Endothelial cell of umbilical vein (primary cell): ENCODE measurements at regions of chr9 and their contacts with region 1.

Region 1: DNA sequence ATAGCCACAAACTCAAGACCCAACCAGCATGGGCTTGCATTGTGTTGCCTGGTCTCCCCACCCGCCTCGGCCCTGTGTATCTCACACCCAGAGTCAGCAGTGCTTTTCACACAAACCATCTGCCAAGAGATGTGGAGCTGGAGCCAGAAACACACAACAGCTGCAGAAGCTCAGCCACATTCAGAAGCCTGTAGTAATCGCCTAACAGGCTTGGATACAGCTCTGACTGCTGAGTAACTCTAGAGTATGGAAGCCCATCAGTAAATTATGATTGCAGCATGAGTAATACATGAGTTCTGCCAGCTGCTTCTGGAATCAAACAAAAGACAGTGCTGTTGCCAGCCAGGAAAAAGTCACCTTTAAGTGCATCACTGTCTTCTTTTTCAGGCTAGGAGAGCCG is 16.0 kb downstream of the TEK start:
- DNase-seq: peak; percentile 89
- H3K4me3 ChIP-seq: no peak overlapping the region
- H3K27ac ChIP-seq: peak overlapping the region; percentile 44
- H3K4me1 ChIP-seq: peaks cover 30% of the 10 kb centered on the region
- H3K27me3 ChIP-seq: no peaks in the 10 kb centered on the region
- CTCF ChIP-seq: no peak
- POLR2A ChIP-seq: no peak

Region 2: DNA sequence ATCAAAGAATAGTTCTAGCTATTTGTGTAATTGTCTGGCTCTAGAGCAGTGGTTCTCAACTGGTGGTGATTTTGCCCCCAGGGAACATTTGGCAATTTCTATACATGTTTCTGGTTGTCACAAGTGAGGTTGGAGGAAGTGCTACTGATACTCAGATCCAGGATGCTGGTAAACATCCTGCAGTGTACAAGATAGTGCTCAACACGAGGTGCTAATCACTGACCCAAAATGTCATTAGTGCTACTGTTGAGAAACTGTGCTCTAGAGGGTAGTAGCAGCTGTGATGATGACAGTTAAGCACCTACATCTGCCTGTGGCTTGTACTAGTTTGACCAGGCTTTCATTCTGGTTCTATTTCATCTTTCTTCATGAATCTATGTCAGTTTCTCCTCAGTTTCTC is 141.7 kb before region 1 on chr9:
- CTCF ChIA-PET with region 1: no interaction called
- POLR2A ChIA-PET with region 1: no interaction called
- dilution Hi-C with region 1: no loop called
- intact Hi-C with region 1: no loop called
- DNase-seq: no peak
- H3K4me3 ChIP-seq: no peak overlapping the region
- H3K27ac ChIP-seq: no peak overlapping the region
- H3K4me1 ChIP-seq: no peaks in the 10 kb centered on the region
- H3K27me3 ChIP-seq: no peaks in the 10 kb centered on the region
- CTCF ChIP-seq: no peak
- POLR2A ChIP-seq: no peak

Region 3: DNA sequence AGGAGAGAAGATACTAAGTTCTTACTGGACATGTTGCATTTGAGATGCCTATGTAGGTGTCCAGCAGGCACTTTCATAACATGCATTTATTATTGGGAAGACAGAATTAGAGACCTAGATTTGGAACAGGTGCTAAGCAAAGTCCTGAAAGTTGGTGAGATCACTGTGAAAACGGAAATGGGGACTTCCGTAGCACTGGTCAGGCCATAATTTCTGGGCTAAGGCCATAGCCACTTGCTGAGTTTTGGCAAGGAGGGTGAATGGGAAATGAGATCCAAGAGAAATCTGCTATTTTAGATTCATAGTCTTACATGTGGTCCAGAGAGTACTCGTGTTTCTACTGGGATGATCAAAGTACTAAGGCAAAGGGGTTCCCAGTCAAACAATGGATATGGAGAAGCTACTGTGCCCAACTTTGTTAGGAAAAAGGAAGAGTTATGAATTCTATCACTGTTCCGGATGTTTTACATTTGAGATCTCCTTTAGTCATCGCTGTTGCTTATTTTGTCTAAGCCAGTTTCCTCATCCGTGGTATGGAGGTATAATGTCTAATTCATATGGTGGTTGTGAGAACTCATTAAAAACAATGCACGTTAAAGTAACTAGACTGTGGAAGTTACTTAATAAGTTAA is 17.4 kb after region 1 on chr9:
- CTCF ChIA-PET with region 1: interaction called, 5 read pairs
- POLR2A ChIA-PET with region 1: interaction called, 3 read pairs
- dilution Hi-C with region 1: no loop called
- intact Hi-C with region 1: loop called (anchors 1 kb)
- DNase-seq: no peak
- H3K4me3 ChIP-seq: peak overlapping the region in 1 of 3 experiments; percentile 34
- H3K27ac ChIP-seq: peak overlapping the region; percentile 68
- H3K4me1 ChIP-seq: peaks cover 33% of the 10 kb centered on the region
- H3K27me3 ChIP-seq: no peaks in the 10 kb centered on the region
- CTCF ChIP-seq: no peak
- POLR2A ChIP-seq: no peak